ENCODE measurements at regions of chr16 and their contacts with region 1.

Region 1: GRCh38 chr16:82082543-82083244 is 47.6 kb downstream of the HSD17B2 start:
- DNase-seq: no peak
- H3K4me3 ChIP-seq: no peak overlapping the region
- H3K27ac ChIP-seq: no peak overlapping the region
- H3K4me1 ChIP-seq: no peaks in the 10 kb centered on the region
- H3K27me3 ChIP-seq: no peaks in the 10 kb centered on the region
- CTCF ChIP-seq: no peak
- POLR2A ChIP-seq: no peak

Region 2: GRCh38 chr16:81838794-81839193 is 243.9 kb before region 1 on chr16:
- intact Hi-C with region 1: no loop called
- DNase-seq: no peak
- H3K4me3 ChIP-seq: no peak overlapping the region
- H3K27ac ChIP-seq: no peak overlapping the region
- H3K4me1 ChIP-seq: no peaks in the 10 kb centered on the region
- H3K27me3 ChIP-seq: no peaks in the 10 kb centered on the region
- CTCF ChIP-seq: no peak
- POLR2A ChIP-seq: no peak

Region 3: DNA sequence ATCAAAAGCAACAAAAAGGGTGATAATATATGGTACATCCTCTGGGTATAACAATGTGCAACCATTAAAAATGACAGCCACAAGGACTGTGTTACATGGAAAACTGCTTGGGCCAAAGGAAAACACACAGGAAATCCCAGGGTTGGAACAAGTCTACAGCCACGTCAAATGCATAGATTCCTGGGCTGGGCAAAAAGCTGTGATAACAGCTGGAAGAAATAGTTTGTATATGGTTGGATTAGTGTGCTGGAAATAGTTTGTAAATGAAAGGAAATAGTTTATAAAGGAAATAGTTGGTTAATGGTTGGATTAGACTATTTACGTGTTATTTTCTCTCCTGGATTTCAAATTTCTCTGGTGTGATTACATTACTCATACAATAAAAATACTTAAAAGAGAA is 45.0 kb before region 1 on chr16:
- intact Hi-C with region 1: loop called (anchors 2 kb)
- DNase-seq: no peak
- H3K4me3 ChIP-seq: no peak overlapping the region
- H3K27ac ChIP-seq: no peak overlapping the region
- H3K4me1 ChIP-seq: no peaks in the 10 kb centered on the region
- H3K27me3 ChIP-seq: no peaks in the 10 kb centered on the region
- CTCF ChIP-seq: no peak
- POLR2A ChIP-seq: no peak

Region 4: GRCh38 chr16:83095941-83096692 is 1013.4 kb after region 1 on chr16:
- intact Hi-C with region 1: no loop called
- DNase-seq: no peak
- H3K4me3 ChIP-seq: no peak overlapping the region
- H3K27ac ChIP-seq: no peak overlapping the region
- H3K4me1 ChIP-seq: no peaks in the 10 kb centered on the region
- H3K27me3 ChIP-seq: no peaks in the 10 kb centered on the region
- CTCF ChIP-seq: no peak
- POLR2A ChIP-seq: no peak